ENCODE measurements at regions of chr20 and their contacts with region 1.

Region 1: DNA sequence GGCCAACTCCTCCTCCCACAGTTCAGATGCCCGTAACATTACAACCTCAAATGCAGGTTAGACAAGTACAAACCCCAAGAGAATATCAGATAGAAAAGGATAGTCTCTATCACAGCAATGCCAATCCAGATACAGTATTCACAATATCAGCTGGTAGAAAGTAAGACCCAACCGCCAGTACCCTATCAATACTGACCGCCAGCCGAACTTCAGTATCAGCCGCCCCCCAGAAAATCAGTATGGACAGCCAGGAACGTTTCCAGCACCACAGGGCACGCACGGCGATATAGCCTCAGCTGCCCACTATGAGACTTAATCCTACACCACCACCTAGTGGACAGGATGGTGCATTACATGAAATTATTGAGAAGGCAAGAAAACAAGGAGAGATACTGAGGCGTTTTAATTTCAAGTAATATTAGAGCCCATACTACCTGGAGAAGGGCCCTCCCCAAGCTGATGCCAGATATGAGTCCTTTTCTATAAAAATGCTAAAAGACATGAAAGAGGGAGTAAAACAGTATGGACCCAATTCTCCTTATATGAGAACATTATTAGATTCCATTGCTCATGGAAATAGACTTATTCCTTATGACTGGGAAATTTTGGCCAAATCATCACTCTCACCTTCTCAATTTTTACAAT is 17.6 kb upstream of the EIF2S2 start:
- DNase-seq: peak; percentile 8 to 86 (median 39)
- ATAC-seq: peak; percentile 96
- H3K4me3 ChIP-seq: no peak overlapping the region
- H3K4me3 Mint-ChIP-seq: no peak overlapping the region
- H3K27ac ChIP-seq: no peak overlapping the region
- H3K27ac Mint-ChIP-seq: no peak overlapping the region
- H3K4me1 ChIP-seq: peaks cover 4% of the 10 kb centered on the region
- H3K4me1 Mint-ChIP-seq: no peaks in the 10 kb centered on the region
- H3K27me3 ChIP-seq: no peaks in the 10 kb centered on the region
- H3K27me3 Mint-ChIP-seq: peaks cover 12% of the 10 kb centered on the region
- CTCF ChIP-seq: peak; percentile 93

Region 2: DNA sequence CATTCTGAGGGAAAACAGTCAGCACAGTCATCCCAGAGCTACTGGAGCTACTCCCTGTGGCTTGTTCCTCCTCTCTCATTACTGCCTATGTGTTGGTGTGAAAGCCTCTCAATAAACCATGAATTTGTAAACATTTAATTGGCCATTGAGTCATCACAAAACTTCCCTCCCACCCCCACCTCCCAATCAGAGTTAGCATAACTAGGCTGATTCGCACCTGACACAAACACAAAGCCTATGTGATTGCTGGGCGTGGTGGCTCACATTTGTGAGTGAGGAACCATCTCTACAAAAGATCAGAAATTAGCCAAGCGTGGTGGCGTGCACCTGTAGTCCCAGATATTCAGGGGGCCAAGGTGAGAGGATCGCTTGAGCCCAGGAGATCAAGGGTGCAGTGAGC is 668.9 kb before region 1 on chr20:
- CTCF ChIA-PET with region 1: no interaction called
- POLR2A ChIA-PET with region 1: no interaction called
- intact Hi-C with region 1: loop called (anchors 5 kb)
- DNase-seq: no peak
- ATAC-seq: no peak
- H3K4me3 ChIP-seq: no peak overlapping the region
- H3K4me3 Mint-ChIP-seq: no peak overlapping the region
- H3K27ac ChIP-seq: no peak overlapping the region
- H3K27ac Mint-ChIP-seq: no peak overlapping the region
- H3K4me1 ChIP-seq: no peaks in the 10 kb centered on the region
- H3K4me1 Mint-ChIP-seq: no peaks in the 10 kb centered on the region
- H3K27me3 ChIP-seq: no peaks in the 10 kb centered on the region
- H3K27me3 Mint-ChIP-seq: no peaks in the 10 kb centered on the region
- CTCF ChIP-seq: no peak

Region 3: DNA sequence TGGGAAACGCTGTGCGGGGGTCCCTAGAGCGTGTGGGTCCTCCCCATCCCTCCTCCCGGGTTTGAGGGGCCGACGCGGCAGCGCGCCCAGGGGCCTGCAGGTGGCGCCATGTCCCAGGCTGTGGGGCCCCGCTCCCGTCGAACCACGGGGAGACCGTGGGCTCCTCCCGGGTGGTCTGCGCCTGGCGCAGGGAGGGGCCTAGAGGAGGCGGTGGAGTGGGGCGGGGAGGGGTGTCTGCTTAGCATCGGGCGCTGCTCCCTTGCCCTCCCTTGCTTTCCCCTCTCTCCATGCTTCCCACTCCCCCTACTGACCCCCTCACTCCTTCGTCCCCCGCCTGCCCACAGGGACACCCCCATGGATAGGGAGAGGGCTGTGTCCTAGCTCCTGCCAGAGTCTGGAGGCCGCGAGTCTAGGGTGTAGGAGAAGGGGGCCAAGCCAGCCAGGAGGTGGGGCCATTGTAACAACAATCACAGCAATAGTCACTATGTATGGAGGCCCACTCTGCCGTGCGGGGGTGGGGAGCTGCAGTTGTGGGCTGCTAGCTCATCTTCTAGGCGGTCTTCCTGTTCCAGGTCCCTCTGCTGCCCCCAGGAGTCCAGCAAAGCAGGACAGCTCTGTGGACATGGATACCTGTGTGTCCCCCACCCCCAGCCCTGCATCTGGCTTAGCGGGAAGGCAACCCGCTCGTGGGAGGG is 266.8 kb before region 1 on chr20:
- CTCF ChIA-PET with region 1: interaction called, 4 read pairs
- POLR2A ChIA-PET with region 1: no interaction called
- intact Hi-C with region 1: loop called (anchors 1 to 2 kb)
- DNase-seq: peak in 13 of 14 experiments; percentile 18 to 65 (median 37)
- ATAC-seq: peak; percentile 37
- H3K4me3 ChIP-seq: no peak overlapping the region
- H3K4me3 Mint-ChIP-seq: no peak overlapping the region
- H3K27ac ChIP-seq: no peak overlapping the region
- H3K27ac Mint-ChIP-seq: no peak overlapping the region
- H3K4me1 ChIP-seq: peaks cover 32% of the 10 kb centered on the region
- H3K4me1 Mint-ChIP-seq: peaks cover 31% of the 10 kb centered on the region
- H3K27me3 ChIP-seq: no peaks in the 10 kb centered on the region
- H3K27me3 Mint-ChIP-seq: no peaks in the 10 kb centered on the region
- CTCF ChIP-seq: peak; percentile 62

Region 4: DNA sequence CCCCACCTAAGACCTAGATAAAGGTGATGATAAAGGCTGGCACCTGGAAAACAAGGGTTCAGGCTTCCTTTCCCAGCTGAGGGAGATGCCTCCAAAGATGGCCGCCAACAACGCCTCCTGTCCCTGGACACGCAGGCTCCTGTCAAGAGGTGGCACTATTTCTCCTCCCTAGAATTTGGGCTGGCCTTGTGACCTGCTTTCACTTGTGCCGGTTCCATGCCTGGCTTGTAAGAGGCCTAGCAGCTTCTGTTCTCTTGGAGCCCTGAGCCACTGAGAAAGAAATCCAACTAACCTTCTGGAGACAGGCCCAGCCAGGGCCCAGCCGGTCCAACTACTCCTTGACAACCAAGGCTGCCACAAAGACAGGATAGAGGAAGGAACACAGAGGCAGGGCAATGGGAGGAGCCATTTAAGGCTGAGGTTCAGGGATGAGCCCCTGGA is 196.2 kb before region 1 on chr20:
- CTCF ChIA-PET with region 1: interaction called, 3 read pairs
- POLR2A ChIA-PET with region 1: no interaction called
- intact Hi-C with region 1: loop called (anchors 1 to 5 kb)
- DNase-seq: peak; percentile 16 to 78 (median 38)
- ATAC-seq: peak; percentile 68
- H3K4me3 ChIP-seq: no peak overlapping the region
- H3K4me3 Mint-ChIP-seq: no peak overlapping the region
- H3K27ac ChIP-seq: no peak overlapping the region
- H3K27ac Mint-ChIP-seq: no peak overlapping the region
- H3K4me1 ChIP-seq: peaks cover 2% of the 10 kb centered on the region
- H3K4me1 Mint-ChIP-seq: no peaks in the 10 kb centered on the region
- H3K27me3 ChIP-seq: no peaks in the 10 kb centered on the region
- H3K27me3 Mint-ChIP-seq: no peaks in the 10 kb centered on the region
- CTCF ChIP-seq: peak; percentile 27

Region 5: DNA sequence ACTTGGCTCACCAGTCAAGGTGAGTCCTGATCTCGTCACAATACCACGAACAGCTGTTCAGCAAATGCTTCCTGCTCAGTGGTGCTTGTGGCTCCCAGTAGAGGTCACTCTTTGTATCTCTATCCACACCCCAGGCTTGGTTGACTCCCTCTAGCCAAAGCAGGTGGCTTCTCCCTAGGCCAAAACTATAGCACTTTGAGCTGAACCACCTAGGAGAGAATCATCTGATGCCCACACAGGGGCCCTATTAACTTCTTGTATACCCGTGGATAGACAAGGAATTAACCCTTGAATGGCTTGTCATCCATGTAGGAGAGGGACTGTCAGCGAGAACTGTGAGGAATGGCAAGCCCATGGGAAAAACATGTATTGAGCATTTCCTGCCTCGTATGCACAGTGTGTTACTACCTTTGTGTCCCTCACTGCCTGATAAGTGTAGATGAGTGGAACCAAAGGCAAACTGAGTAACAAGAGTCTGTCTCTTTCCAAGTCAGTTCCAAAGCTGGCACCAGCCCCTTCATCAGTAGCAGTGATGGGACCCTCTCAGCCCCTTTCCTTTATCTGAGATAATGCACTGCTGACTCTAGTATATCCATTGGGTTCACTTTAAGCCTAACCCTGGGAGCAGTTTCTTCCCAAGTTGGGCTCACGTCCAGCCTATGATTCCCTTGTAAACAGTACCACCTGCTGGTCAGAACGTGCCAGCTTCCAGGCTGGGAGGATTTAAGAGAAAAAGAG is 60.1 kb before region 1 on chr20:
- CTCF ChIA-PET with region 1: interaction called, 13 read pairs
- POLR2A ChIA-PET with region 1: no interaction called
- intact Hi-C with region 1: loop called (anchors 1 kb)
- DNase-seq: peak; percentile 33 to 79 (median 46)
- ATAC-seq: peak; percentile 90
- H3K4me3 ChIP-seq: no peak overlapping the region
- H3K4me3 Mint-ChIP-seq: no peak overlapping the region
- H3K27ac ChIP-seq: no peak overlapping the region
- H3K27ac Mint-ChIP-seq: peak overlapping the region; percentile 39
- H3K4me1 ChIP-seq: peaks cover 12% of the 10 kb centered on the region
- H3K4me1 Mint-ChIP-seq: peaks cover 52% of the 10 kb centered on the region
- H3K27me3 ChIP-seq: no peaks in the 10 kb centered on the region
- H3K27me3 Mint-ChIP-seq: no peaks in the 10 kb centered on the region
- CTCF ChIP-seq: peak; percentile 78

Measured in CD4-positive, alpha-beta T cell (primary cell).